ENCODE measurements at regions of chr5 and their contacts with region 1.

Region 1: DNA sequence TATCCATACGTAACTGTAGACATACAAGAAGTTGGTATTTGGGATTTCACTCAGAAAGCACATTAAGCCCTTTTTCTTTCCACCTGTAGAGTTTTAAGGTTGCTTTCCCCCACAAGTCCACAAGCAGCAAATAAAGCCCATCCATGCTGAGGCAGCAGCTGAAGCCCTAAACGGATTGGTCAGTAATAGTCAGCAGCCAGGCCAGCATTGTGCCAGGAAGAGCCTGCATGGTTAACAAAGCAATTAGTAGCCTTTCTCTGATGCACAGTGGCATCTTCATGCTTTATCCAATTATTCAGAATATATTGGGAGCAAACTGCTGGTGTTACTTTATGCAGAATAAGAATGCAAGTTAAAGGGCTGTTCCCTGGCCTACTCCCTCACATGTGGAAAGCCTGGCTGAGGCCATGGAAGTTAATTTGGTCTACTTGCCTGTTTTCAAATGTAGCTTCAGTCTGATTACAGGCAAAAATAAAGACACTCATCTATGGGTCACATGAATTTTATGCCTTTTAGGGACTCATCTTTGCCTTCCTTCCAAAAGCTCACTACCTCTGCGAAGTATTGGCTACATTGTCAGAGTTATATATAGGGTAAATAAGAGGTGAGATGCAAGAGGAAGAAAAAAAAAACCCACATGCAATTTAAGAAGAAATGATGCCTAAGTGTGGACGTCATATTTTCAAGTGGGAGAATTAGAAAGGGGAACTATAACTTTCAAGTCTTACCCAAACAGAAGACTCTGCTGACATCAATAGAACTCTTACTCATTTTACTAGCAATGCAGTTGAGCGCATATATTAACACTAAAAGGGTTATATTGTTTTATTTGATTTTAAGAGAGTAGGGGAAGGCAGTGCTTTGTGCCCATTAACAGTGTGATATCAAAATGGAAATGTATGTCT is 15.9 kb downstream of the EBF1 start:
- DNase-seq: no peak
- ATAC-seq: peak; percentile 93
- H3K4me3 Mint-ChIP-seq: peak overlapping the region; percentile 72
- H3K27ac Mint-ChIP-seq: peak overlapping the region; percentile 93
- H3K4me1 Mint-ChIP-seq: peaks cover 70% of the 10 kb centered on the region
- H3K27me3 Mint-ChIP-seq: no peaks in the 10 kb centered on the region
- CTCF ChIP-seq: no peak

Region 2: GRCh38 chr5:158777647-158778350 is 306.0 kb before region 1 on chr5:
- CTCF ChIA-PET with region 1: no interaction called
- POLR2A ChIA-PET with region 1: no interaction called
- intact Hi-C with region 1: loop called (anchors 5 kb)
- DNase-seq: no peak
- ATAC-seq: no peak
- H3K4me3 Mint-ChIP-seq: no peak overlapping the region
- H3K27ac Mint-ChIP-seq: peak overlapping the region; percentile 92
- H3K4me1 Mint-ChIP-seq: peaks cover 92% of the 10 kb centered on the region
- H3K27me3 Mint-ChIP-seq: no peaks in the 10 kb centered on the region
- CTCF ChIP-seq: no peak

Region 3: GRCh38 chr5:159010661-159011442 is 72.9 kb before region 1 on chr5:
- CTCF ChIA-PET with region 1: interaction called, 3 read pairs
- POLR2A ChIA-PET with region 1: interaction called, 3 read pairs
- intact Hi-C with region 1: loop called (anchors 5 kb)
- DNase-seq: no peak
- ATAC-seq: peak; percentile 82
- H3K4me3 Mint-ChIP-seq: peak overlapping the region; percentile 78
- H3K27ac Mint-ChIP-seq: peak overlapping the region; percentile 91
- H3K4me1 Mint-ChIP-seq: peaks cover 91% of the 10 kb centered on the region
- H3K27me3 Mint-ChIP-seq: no peaks in the 10 kb centered on the region
- CTCF ChIP-seq: no peak

Region 4: GRCh38 chr5:159038907-159039306 is 44.9 kb before region 1 on chr5:
- CTCF ChIA-PET with region 1: no interaction called
- POLR2A ChIA-PET with region 1: no interaction called
- intact Hi-C with region 1: no loop called
- DNase-seq: no peak
- ATAC-seq: no peak
- H3K4me3 Mint-ChIP-seq: no peak overlapping the region
- H3K27ac Mint-ChIP-seq: peak overlapping the region; percentile 75
- H3K4me1 Mint-ChIP-seq: peaks cover 78% of the 10 kb centered on the region
- H3K27me3 Mint-ChIP-seq: no peaks in the 10 kb centered on the region
- CTCF ChIP-seq: no peak

Region 5: GRCh38 chr5:159094745-159095144 is 10.9 kb after region 1 on chr5:
- CTCF ChIA-PET with region 1: no interaction called
- POLR2A ChIA-PET with region 1: interaction called, 150 read pairs
- intact Hi-C with region 1: loop called (anchors 1 kb)
- DNase-seq: peak; percentile 44
- ATAC-seq: no peak
- H3K4me3 Mint-ChIP-seq: peak overlapping the region; percentile 99
- H3K27ac Mint-ChIP-seq: peak overlapping the region; percentile 67
- H3K4me1 Mint-ChIP-seq: peaks cover 70% of the 10 kb centered on the region
- H3K27me3 Mint-ChIP-seq: no peaks in the 10 kb centered on the region
- CTCF ChIP-seq: no peak